Right cardiac atrium (tissue), 5 donors: ENCODE measurements at regions of chr10 and their contacts with region 1.

Region 1: GRCh38 chr10:88932539-88933256 is 19.9 kb downstream of the ACTA2 start:
- DNase-seq: peak; percentile 48 to 70 (median 66)
- ATAC-seq: peak; percentile 68 to 80
- H3K4me3 ChIP-seq: no peak overlapping the region
- H3K27ac ChIP-seq: peak overlapping the region; percentile 50
- H3K4me1 ChIP-seq: peaks cover 3% of the 10 kb centered on the region
- H3K27me3 ChIP-seq: no peaks in the 10 kb centered on the region

Region 2: GRCh38 chr10:88865281-88865876 is 67.3 kb before region 1 on chr10:
- intact Hi-C with region 1: no loop called
- DNase-seq: no peak
- ATAC-seq: no peak
- H3K4me3 ChIP-seq: no peak overlapping the region
- H3K27ac ChIP-seq: no peak overlapping the region
- H3K4me1 ChIP-seq: no peaks in the 10 kb centered on the region
- H3K27me3 ChIP-seq: no peaks in the 10 kb centered on the region

Region 3: DNA sequence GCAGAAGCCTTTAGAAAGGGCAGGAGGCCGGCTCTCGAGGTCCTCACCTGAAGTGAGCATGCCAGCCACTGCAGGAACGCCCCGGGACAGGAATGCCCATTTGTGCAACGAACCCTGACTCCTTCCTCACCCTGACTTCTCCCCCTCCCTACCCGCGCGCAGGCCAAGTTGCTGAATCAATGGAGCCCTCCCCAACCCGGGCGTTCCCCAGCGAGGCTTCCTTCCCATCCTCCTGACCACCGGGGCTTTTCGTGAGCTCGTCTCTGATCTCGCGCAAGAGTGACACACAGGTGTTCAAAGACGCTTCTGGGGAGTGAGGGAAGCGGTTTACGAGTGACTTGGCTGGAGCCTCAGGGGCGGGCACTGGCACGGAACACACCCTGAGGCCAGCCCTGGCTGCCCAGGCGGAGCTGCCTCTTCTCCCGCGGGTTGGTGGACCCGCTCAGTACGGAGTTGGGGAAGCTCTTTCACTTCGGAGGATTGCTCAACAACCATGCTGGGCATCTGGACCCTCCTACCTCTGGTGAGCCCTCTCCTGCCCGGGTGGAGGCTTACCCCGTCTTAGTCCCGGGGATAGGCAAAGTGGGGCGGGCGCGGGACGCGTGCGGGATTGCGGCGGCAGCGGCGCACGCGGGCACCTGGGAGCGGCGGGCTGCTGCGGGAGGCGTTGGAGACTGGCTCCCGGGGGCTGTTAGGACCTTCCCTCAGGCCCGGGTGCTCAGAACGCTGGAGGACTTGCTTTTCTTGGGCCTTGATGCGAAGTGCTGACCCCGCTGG is 57.9 kb after region 1 on chr10 and contains the start of gene FAS:
- intact Hi-C with region 1: loop called (anchors 2 to 5 kb)
- DNase-seq: peak; percentile 75 to 90 (median 88)
- ATAC-seq: peak; percentile 90 to 91
- H3K4me3 ChIP-seq: peak within 1 kb of the TSS; percentile 77
- H3K27ac ChIP-seq: peak within 1 kb of the TSS; percentile 95
- H3K4me1 ChIP-seq: peaks cover 2% of the 10 kb centered on the region
- H3K27me3 ChIP-seq: no peaks in the 10 kb centered on the region
- total RNA-seq, gene FAS: 5.7 to 10.1 (median 6.5) TPM

Region 4: GRCh38 chr10:89217057-89217990 is 284.6 kb after region 1 on chr10:
- intact Hi-C with region 1: loop called in 3 of 4 experiments (anchors 5 to 10 kb)
- DNase-seq: peak in 2 of 3 donors; percentile 33 to 76
- ATAC-seq: peak in 1 of 2 donors; percentile 29
- H3K4me3 ChIP-seq: no peak overlapping the region
- H3K27ac ChIP-seq: peak overlapping the region; percentile 68
- H3K4me1 ChIP-seq: peaks cover 2% of the 10 kb centered on the region
- H3K27me3 ChIP-seq: no peaks in the 10 kb centered on the region